ENCODE measurements at regions of chr6 and their contacts with region 1.

Region 1: GRCh38 chr6:133752129-133752528 is 136.8 kb upstream of the TCF21 start:
- DNase-seq: no peak
- H3K4me3 ChIP-seq: no peak overlapping the region
- H3K27ac ChIP-seq: no peak overlapping the region
- H3K4me1 ChIP-seq: peaks cover 0 to 7% of the 10 kb centered on the region in 2 donors
- H3K27me3 ChIP-seq: no peaks in the 10 kb centered on the region
- CTCF ChIP-seq: no peak

Region 2: DNA sequence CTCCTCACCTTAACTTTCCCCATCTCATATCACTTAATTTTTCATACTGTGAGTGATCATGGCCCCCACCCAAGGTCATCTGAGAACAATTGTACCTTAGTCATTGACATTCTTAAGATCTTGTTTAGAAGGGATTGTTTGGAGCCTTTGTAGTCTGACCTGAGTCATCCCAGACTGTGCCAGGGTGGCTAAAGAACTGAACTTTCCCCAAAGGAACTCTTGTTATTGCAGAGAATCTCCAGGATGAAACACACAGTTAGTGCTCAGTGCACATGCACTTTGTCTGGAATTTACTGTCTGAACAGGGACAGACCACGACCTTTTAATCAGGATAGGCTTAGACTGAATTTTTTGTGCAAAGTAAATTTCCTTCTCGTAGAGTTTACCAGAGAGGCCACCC is 1688.4 kb before region 1 on chr6:
- intact Hi-C with region 1: no loop called
- DNase-seq: no peak
- H3K4me3 ChIP-seq: no peak overlapping the region
- H3K27ac ChIP-seq: no peak overlapping the region
- H3K4me1 ChIP-seq: no peaks in the 10 kb centered on the region
- H3K27me3 ChIP-seq: no peaks in the 10 kb centered on the region
- CTCF ChIP-seq: no peak

Region 3: GRCh38 chr6:133707456-133707855 is 44.7 kb before region 1 on chr6:
- intact Hi-C with region 1: loop called (anchors 5 kb)
- DNase-seq: no peak
- H3K4me3 ChIP-seq: no peak overlapping the region
- H3K27ac ChIP-seq: no peak overlapping the region
- H3K4me1 ChIP-seq: peaks cover 0 to 3% of the 10 kb centered on the region in 2 donors
- H3K27me3 ChIP-seq: no peaks in the 10 kb centered on the region
- CTCF ChIP-seq: no peak

Region 4: DNA sequence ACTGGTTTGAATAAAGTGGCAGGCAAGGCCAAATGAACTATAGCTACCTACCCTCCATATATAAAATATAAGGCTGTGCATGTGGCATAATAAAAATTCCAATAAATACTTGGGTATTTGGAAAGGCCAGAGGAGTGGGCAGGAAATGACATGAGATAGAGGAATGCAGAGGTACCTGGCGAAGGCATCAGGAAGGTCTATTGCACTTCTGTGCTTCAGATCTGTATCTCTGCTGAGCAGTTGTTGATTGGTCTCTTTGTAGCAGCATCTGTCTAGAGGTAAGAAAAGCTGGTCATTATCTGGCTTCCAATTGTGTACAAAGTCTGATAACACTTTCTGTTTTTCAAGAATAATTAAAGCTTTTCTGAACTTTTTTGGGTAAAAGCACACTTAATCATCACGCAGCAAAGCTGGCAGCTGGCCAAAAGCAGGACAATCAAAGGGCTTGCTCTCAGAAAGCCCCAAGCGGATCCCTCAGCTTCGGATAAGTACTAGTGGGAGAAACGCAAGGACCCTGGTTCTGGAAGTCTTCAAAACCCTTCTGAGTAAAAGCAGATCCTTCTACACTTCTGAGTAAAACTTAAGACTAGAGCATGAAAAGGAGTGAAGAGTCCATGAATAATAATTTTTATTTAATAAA is 16.6 kb after region 1 on chr6:
- intact Hi-C with region 1: no loop called
- DNase-seq: peak in 1 of 2 donors; percentile 65
- H3K4me3 ChIP-seq: no peak overlapping the region
- H3K27ac ChIP-seq: no peak overlapping the region
- H3K4me1 ChIP-seq: peaks cover 0 to 14% of the 10 kb centered on the region in 2 donors
- H3K27me3 ChIP-seq: no peaks in the 10 kb centered on the region
- CTCF ChIP-seq: no peak

Region 5: DNA sequence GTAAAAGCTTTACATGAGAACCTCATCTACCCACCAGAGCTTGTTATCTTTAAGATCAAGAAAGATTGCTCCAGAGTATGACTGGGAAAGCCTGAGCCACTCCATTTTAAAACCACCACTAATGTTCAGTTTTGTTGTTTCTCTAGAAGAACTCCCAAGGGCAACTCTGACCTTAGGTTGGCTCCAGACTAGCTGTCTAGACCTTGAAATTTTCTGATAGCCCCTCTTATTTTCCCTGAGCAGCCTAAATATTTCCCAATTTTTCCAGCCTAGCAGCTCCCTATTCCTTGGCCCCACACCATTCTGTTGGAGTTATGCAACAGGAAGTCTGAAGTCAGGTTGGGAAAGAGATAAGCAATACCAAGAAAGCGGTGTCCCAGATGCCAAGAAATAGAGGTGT is 52.1 kb after region 1 on chr6:
- intact Hi-C with region 1: no loop called
- DNase-seq: no peak
- H3K4me3 ChIP-seq: no peak overlapping the region
- H3K27ac ChIP-seq: peak overlapping the region; percentile 48 to 51
- H3K4me1 ChIP-seq: peaks cover 6 to 15% of the 10 kb centered on the region in 2 donors
- H3K27me3 ChIP-seq: no peaks in the 10 kb centered on the region
- CTCF ChIP-seq: no peak

Region 6: DNA sequence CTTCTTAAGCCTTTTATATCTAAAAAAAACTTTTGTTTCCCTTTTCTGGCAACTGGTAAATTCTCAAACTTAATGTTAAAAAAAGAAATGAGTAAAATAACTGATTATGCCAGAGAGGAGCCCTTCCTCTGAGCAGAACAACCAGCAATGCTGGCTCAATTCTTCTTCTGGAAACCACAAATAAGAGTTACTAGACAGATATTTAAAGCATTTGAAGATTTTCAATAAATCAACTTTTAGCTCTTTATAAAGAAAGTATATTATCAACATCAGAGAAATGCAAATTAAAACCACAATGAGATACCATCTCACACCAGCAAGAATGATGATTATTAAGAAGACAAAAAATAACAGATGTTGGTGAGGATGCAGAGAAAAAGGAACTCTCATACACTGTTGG is 75.6 kb after region 1 on chr6:
- intact Hi-C with region 1: no loop called
- DNase-seq: no peak
- H3K4me3 ChIP-seq: no peak overlapping the region
- H3K27ac ChIP-seq: no peak overlapping the region
- H3K4me1 ChIP-seq: no peaks in the 10 kb centered on the region
- H3K27me3 ChIP-seq: no peaks in the 10 kb centered on the region
- CTCF ChIP-seq: no peak

Measured in ascending aorta (tissue), 2 donors.